BJ (cell line): ENCODE measurements at regions of chr5 and their contacts with region 1.

Region 1: GRCh38 chr5:122192497-122193496 is 63.5 kb downstream of the ZNF474 start:
- DNase-seq: peak; percentile 16
- H3K4me3 ChIP-seq: no peak overlapping the region
- H3K27me3 ChIP-seq: no peaks in the 10 kb centered on the region
- CTCF ChIP-seq: peak; percentile 67

Region 2: GRCh38 chr5:122202952-122203351 is 10.2 kb after region 1 on chr5:
- CTCF ChIA-PET with region 1: interaction called, 24 read pairs
- POLR2A ChIA-PET with region 1: no interaction called
- DNase-seq: no peak
- H3K4me3 ChIP-seq: no peak overlapping the region
- H3K27me3 ChIP-seq: peaks cover 2% of the 10 kb centered on the region; the same call in 1 of the 2 replicates
- CTCF ChIP-seq: no peak

Region 3: DNA sequence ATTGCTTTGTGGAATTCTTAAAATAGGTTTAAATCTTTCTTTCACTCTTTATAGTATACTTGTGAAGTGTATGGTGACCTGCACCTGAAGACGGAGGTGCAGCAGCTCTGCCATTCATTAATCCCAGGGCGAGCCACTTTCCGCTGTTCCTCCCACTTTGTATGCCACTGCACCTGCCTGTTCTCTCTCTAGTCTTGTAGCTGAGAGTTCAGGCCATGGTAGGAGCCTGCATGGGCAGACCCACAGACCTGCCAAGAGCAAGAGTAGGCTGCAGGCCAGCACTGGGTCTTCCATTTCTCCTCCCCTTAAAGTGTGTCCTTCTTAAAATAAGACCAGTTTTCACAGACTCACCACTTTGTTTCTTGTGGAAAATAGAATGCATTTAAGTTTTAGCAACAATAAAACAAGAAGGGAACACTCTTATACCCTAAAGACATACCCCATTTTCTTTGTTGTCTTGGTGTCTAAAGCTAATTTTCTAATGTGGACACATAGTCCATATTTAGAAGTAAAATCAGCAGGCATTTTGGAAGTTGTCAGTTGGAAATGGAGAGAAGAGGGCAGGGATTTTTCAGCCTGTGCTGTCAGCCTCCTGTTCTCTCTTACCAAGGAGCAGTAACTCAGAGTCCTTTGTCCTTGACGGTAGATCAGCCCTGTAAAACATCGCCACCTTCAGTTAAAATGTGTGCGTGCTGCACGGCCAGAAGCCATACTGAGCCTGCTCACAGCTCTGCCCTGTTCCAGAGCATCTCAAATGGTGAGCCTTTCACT is 222.4 kb after region 1 on chr5:
- CTCF ChIA-PET with region 1: interaction called, 60 read pairs
- POLR2A ChIA-PET with region 1: no interaction called
- DNase-seq: peak; percentile 13
- H3K4me3 ChIP-seq: no peak overlapping the region
- H3K27me3 ChIP-seq: no peaks in the 10 kb centered on the region
- CTCF ChIP-seq: peak; percentile 78

Region 4: DNA sequence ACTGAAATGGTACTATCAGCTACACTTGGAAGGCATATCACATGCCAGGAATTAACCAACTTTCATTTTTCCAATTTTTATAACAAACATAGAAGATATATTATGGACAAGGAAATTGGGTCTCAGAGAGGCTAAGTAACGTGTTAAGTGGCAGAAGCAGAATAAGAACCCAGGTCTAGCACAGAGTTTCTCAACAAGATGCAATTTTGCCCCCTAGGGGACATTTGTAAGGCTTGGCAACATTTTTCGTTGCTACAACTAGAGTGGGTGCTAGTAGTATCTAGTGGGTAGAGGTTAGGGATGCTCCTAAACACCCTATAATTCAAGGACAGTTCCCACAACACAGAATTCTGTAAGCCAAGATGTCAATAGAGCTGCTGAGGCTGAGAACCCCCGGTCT is 299.9 kb after region 1 on chr5:
- CTCF ChIA-PET with region 1: interaction called, 27 read pairs
- POLR2A ChIA-PET with region 1: no interaction called
- DNase-seq: no peak
- H3K4me3 ChIP-seq: no peak overlapping the region
- H3K27me3 ChIP-seq: no peaks in the 10 kb centered on the region
- CTCF ChIP-seq: peak; percentile 31; the same call in 1 of the 2 replicates